ENCODE measurements at regions of chr1 and their contacts with region 1.

Region 1: DNA sequence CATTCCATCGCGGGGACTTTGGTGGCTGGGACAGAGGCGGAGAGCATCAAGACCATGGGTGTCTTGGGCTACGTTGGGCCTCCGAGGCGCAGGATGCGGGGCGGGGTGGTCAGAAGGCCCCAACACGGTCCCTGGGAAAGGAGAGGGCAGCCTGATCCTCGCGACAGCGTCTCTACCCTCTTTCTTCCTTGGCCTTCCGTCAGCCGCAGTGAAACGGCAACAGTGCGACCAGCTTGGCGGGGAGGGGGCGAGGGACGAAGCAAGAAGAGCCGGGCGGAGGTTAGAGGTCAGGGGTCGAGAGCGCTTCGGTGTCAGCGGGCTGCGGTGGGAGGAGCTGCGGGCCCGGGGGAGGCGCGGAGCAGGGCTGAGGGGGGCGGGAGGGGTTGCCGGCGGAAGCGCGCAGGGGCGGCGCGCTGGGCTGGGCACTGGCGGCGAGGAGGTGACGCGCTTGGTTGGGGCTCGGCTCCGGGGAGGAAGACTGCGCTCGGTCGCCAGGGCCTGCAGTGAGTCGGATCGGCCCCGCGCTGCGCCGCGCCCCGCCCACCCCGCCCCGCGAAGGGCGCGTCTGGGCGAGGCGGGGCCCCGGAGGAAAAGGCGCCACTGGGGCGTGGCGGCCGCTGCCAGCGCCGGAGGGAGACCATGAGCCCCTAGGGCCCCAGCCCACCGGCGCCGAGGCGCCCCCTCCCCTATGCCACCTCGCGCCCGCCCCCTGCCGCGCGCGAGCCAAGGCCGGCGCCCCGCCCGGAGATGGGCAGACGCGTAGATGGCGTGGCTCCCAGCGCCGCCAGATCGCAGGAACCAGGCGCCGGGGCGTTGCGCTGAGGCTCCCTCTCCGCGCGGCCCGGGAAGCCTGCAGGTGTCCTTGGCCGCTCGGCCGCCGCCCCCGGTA is at the start of gene KCNC4:
- DNase-seq: peak; percentile 96
- ATAC-seq: peak; percentile 93
- H3K4me3 Mint-ChIP-seq: peak within 1 kb of the TSS; percentile 79
- H3K27ac Mint-ChIP-seq: peak within 1 kb of the TSS; percentile 91
- H3K4me1 Mint-ChIP-seq: peaks cover 44% of the 10 kb centered on the region
- H3K27me3 Mint-ChIP-seq: peaks cover 13% of the 10 kb centered on the region
- total RNA-seq, gene KCNC4: 4.8 to 9.6 TPM

Region 2: GRCh38 chr1:110262846-110263631 is 53.1 kb after region 1 on chr1:
- CTCF ChIA-PET with region 1: interaction called, 22 read pairs
- DNase-seq: peak; percentile 48
- ATAC-seq: peak; percentile 80
- H3K4me3 Mint-ChIP-seq: no peak overlapping the region
- H3K27ac Mint-ChIP-seq: no peak overlapping the region
- H3K4me1 Mint-ChIP-seq: peaks cover 4% of the 10 kb centered on the region
- H3K27me3 Mint-ChIP-seq: no peaks in the 10 kb centered on the region

Region 3: DNA sequence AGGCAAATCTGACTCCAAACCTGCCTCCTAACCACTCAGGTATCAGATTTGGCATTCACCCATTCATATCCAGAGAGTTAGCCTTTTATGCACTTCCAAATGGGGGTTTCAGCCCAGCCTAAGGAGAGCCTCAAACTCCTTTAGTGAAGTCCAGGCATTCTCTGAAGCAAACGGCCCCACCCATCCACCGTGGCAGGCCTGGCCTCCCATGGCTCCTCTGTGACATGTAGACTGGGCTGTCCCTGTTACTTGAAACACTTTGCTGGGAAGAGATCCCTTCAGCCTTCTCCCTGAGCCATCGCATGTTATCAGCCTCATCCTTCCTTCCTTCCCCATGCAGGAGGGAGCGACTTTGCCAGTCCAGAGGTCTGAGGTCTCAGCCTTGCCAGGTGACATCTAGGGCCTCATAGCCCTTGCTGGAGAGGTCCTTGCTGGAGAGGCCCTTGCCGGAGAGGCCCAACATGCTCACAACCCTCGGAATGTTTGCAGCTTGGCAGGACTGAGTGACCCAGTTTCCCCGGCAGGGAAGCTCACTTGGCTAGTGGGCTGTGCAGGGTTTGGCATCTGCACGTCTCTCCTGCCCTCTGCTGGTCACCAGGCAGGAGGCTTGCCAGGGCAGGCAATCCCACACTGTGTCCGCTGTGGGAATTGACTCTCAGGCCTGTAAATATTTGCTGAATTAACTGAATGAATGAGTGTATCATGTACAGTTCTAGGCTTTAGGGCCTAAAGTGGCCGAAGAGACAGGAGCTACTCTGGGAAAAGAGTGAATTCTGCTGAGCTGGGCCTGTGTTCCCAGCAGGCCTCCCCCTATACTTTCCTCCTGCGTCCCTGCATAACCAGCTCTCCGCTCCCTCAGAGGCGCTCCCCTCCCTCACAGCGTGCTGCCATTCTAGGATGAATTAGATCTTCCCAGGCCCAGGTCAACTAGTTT is 102.5 kb after region 1 on chr1:
- CTCF ChIA-PET with region 1: interaction called, 415 read pairs
- DNase-seq: peak; percentile 76
- ATAC-seq: peak; percentile 96
- H3K4me3 Mint-ChIP-seq: no peak overlapping the region
- H3K27ac Mint-ChIP-seq: no peak overlapping the region
- H3K4me1 Mint-ChIP-seq: no peaks in the 10 kb centered on the region
- H3K27me3 Mint-ChIP-seq: no peaks in the 10 kb centered on the region

Region 4: GRCh38 chr1:110338886-110339406 is 129.0 kb after region 1 on chr1 and contains the start of gene RBM15:
- CTCF ChIA-PET with region 1: interaction called, 97 read pairs
- DNase-seq: peak; percentile 99
- ATAC-seq: peak; percentile 80
- H3K4me3 Mint-ChIP-seq: no peak within 1 kb of the TSS
- H3K27ac Mint-ChIP-seq: no peak within 1 kb of the TSS
- H3K4me1 Mint-ChIP-seq: peaks cover 49% of the 10 kb centered on the region
- H3K27me3 Mint-ChIP-seq: no peaks in the 10 kb centered on the region
- total RNA-seq, gene RBM15: 76.5 to 122 TPM

Region 5: DNA sequence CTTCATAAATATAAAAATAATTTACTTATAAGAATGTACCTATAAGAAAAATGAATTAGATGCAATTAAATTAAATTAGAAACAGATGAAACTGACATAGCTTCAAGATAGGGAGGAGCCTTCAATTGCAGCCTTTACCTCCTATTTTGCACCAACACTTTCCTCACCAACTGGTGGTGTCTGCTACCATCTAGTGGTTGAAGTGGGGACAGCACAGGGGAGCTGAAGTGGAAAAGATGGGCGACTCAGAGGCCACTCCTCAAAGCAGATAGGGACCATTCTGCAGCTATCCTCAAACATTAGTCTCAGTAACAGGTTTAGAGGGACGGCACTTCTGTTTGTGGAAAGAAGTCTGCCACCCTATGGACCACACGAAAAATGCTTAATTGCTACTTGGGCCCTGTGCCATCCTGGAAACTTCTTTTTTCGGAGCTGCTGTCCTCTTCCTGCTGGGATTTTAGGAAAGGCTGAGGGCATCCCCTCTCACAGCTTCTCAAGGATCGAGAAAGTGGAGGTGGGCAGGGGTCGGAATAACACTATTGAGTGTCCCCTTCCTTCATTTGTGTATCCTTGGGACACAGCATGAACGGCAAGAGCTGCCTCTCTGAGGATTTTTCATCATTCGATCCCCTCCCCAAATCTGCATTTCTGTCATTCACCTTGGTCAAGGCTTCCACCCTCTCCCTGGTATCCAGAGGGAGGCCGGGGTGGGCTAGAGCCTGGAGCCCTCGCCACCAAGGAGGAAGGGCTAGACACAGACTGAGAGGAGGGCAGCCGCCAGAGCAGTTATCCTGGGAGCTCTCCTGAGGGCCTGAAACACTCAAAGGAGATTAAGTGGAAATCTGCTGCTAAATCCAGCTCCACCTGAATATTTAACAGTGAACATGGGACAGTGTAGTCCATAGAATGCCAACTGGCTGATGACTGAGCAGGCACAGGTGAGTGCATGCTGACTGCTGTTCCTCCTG is 250.6 kb after region 1 on chr1:
- CTCF ChIA-PET with region 1: interaction called, 125 read pairs
- DNase-seq: peak; percentile 89
- ATAC-seq: peak; percentile 90
- H3K4me3 Mint-ChIP-seq: no peak overlapping the region
- H3K27ac Mint-ChIP-seq: no peak overlapping the region
- H3K4me1 Mint-ChIP-seq: no peaks in the 10 kb centered on the region
- H3K27me3 Mint-ChIP-seq: peaks cover 2% of the 10 kb centered on the region

Measured in activated CD8-positive, alpha-beta memory T cell treated with anti-CD3 and anti-CD28 coated beads, Interleukin-2, amount 10 ng/mL, durations not matched to agents 7 days and 5 days (primary cell).